ENCODE measurements at regions of chr3 and their contacts with region 1.

Region 1: DNA sequence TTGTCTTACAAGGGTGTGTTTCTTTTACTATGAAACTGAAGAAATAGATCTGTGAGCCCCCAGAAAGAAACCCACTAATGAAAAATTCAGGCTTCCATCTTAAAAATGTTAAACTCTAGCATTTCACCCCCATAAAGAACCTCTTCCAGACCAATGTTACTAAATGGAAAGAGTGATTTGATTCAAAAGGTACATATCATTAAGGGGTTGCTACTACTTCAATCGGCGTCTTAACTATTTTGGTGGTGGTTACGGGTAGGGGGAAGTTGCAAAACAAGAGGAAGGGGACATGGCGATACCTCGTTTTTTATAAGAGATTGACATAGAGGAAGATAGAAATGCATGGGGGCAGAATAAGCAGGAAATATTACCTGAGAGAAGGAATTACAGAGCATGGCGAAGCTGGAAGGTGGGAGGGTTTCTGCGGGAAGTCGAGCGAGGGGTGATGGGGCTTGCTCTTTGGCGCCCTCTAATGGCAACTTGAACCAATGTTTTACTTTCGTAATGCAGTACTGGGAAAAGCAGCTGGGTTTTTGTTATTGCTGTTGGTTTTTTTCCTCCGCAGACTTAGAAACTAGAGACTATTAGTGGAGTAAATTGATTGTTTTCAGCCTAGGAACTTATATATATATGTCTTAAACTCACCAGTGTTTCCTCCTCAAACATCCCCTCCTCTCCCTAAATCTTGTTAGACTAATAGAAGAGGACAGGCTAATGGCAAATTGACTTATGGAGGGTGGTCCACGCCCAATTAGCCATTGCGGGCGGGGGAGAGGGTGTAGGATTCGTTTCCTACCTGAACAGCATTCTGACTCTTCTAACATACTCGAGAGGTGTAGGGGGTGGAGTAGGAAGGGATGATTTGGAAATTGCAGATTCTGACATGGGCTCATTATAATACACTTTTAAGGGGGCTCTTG is 11.3 kb upstream of the SOX2 start:
- DNase-seq: peak in 8 of 10 donors; percentile 61 to 80 (median 74)
- H3K4me3 ChIP-seq: peak overlapping the region; percentile 10 to 93 (median 70)
- H3K27ac ChIP-seq: peak overlapping the region; percentile 77 to 100 (median 98)
- H3K27me3 ChIP-seq: peaks cover 0 to 86% (median 46%) of the 10 kb centered on the region in 45 donors
- CTCF ChIP-seq: peak; percentile 75 to 96 (median 88)

Region 2: DNA sequence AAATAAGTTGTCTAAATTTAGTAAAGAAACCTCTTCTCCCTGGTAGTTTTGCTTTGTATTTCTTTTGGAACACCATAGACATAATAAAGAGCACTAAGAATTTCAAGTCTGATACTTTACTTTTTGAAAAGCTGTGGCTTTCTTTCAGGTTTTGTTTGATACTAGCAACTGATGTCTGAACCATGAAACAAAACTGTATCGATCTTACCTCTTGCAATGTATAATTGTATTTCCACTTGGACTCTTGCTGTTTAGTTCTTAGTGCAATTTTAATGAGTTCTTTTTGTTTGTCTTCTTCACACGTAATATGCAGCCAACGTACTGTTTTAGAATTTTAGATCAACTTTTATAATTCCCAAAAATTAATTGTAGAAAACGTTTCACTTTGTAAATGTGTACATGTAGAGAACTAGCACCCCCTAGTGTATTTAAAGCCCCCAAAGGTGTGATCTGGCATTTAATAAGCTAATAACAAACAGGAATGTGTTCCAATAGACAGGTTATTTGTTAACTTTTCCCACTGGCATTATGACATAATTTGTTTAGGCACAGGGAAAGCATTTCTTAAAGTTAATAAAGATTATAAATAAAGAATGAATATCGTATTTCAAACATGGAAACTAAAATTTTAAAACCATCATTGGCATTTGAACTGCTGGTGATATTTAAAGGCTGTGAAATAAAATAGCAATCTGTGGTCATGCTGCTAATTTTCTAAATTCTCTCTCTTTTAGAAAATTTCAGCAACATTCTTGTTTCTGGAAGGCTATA is 421.8 kb before region 1 on chr3:
- intact Hi-C with region 1: loop called in 1 of 2 experiments (anchors 5 kb)
- DNase-seq: no peak
- H3K4me3 ChIP-seq: peak overlapping the region in 55 of 59 donors; percentile 1 to 60 (median 34)
- H3K27ac ChIP-seq: no peak overlapping the region
- H3K27me3 ChIP-seq: no peaks in the 10 kb centered on the region
- CTCF ChIP-seq: peak in 53 of 56 donors; percentile 12 to 71 (median 45)

Region 3: DNA sequence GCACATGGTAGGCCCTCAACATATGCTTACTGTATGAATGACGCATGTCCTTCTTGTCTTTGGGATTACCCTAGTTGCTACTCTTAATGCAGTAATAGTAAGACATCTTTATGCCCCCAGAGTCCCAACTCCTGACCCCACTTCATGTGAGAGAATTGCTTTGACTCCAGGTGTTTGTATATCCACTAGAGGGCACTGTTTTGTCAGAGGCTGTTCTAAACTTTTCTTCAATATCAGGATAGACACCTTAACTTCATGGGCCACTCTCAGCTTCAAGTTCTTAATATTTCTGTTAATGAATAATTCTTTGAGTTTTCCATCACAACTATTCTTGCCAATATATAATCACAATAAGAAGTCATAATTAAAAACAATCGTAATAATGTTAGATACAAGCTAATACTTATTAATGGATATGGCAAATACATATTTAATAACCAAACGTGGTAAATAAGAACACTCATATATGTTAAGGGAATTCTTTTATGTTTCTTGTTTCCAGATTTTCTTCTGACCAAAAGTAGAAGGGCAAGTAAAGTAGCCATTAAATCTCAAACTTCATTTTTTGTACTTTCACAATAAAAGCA is 373.7 kb before region 1 on chr3:
- intact Hi-C with region 1: loop called (anchors 2 to 5 kb)
- DNase-seq: peak in 1 of 10 donors; percentile 13
- H3K4me3 ChIP-seq: peak overlapping the region in 14 of 59 donors; percentile 0 to 46 (median 12)
- H3K27ac ChIP-seq: peak overlapping the region in 33 of 59 donors; percentile 2 to 79 (median 58)
- H3K27me3 ChIP-seq: no peaks in the 10 kb centered on the region
- CTCF ChIP-seq: peak; percentile 58 to 91 (median 80)

Region 4: DNA sequence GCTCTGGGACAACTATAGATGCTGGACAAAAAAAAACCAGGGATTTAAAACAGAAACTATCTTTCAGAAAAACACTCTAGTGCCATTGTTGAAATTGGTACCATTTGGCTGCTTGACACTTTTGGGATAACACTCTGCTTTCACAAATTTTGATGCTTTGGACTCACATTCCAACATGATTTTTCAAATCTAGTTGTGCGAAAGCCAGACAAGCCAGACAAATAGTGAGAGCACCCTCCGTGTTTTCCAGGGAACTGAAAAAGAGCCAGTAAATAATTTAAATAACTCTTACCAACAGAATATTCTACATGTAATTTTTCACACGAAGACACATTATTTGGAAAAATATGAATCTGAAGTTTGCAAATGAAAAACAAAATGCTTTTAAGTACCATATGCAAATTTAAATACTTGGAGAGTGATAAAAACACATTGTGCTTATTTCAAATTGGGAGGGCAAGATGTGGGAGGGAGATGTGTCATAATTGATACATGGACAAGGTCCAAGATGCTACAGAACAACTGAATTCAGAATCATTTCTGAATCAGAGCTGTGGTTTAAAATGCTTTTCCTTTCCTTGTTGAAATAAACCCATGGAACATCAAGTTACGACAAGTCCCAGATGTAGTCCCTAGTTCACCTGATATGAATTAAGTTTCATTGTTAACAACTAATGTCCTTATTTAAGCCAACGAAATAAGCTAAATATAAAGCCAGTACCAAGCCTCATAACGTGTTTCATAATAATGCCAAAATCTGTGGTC is 132.9 kb before region 1 on chr3:
- intact Hi-C with region 1: loop called (anchors 2 to 5 kb)
- DNase-seq: no peak
- H3K4me3 ChIP-seq: peak overlapping the region in 53 of 59 donors; percentile 4 to 58 (median 36)
- H3K27ac ChIP-seq: peak overlapping the region; percentile 23 to 92 (median 82)
- H3K27me3 ChIP-seq: no peaks in the 10 kb centered on the region
- CTCF ChIP-seq: peak in 1 of 56 donors; percentile 2

Region 5: DNA sequence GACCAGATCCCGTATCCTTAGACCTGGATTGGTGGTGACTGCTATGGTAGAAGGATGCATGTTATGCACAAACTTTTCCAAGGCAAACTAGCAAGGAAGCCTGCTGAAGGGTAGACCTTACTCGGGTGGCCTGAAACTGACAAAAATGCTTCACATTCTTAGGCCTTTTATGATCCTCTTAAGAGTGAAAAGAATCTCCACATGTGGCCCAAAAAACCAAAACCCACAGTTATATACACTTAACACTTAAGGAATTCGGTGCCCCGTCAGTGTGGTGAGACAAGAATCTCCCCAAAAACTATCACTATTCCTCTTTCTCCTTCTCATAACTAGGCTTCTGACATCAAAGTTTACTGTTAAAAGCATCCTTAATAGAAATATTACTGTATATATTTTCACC is 118.8 kb before region 1 on chr3:
- intact Hi-C with region 1: loop called in 1 of 2 experiments (anchors 5 kb)
- DNase-seq: no peak
- H3K4me3 ChIP-seq: no peak overlapping the region
- H3K27ac ChIP-seq: peak overlapping the region in 34 of 59 donors; percentile 0 to 87 (median 59)
- H3K27me3 ChIP-seq: no peaks in the 10 kb centered on the region
- CTCF ChIP-seq: no peak